Lower leg skin (tissue), 4 donors: ENCODE measurements at regions of chr6 and their contacts with region 1.

Region 1: GRCh38 chr6:28634761-28635546 is 109.3 kb downstream of the GPX5 start:
- DNase-seq: no peak
- H3K4me3 ChIP-seq: no peak overlapping the region
- CTCF ChIP-seq: no peak
- POLR2A ChIP-seq: no peak

Region 2: GRCh38 chr6:28360961-28361360 is 274.0 kb before region 1 on chr6:
- intact Hi-C with region 1: loop called (anchors 5 kb)
- DNase-seq: no peak
- H3K4me3 ChIP-seq: no peak overlapping the region
- CTCF ChIP-seq: no peak
- POLR2A ChIP-seq: no peak